A549 (cell line): ENCODE measurements at regions of chr5 and their contacts with region 1.

Region 1: GRCh38 chr5:158074992-158075769 is 216.2 kb upstream of the CLINT1 start:
- DNase-seq: peak; percentile 59 to 70
- ATAC-seq: peak; percentile 88 to 95
- H3K4me3 ChIP-seq: no peak overlapping the region
- H3K27ac ChIP-seq: no peak overlapping the region
- H3K4me1 ChIP-seq: no peaks in the 10 kb centered on the region
- CTCF ChIP-seq: peak; percentile 69
- EP300 ChIP-seq: no peak
- POLR2A ChIP-seq: no peak
- RAD21 ChIP-seq: peak; percentile 65 to 68

Region 2: DNA sequence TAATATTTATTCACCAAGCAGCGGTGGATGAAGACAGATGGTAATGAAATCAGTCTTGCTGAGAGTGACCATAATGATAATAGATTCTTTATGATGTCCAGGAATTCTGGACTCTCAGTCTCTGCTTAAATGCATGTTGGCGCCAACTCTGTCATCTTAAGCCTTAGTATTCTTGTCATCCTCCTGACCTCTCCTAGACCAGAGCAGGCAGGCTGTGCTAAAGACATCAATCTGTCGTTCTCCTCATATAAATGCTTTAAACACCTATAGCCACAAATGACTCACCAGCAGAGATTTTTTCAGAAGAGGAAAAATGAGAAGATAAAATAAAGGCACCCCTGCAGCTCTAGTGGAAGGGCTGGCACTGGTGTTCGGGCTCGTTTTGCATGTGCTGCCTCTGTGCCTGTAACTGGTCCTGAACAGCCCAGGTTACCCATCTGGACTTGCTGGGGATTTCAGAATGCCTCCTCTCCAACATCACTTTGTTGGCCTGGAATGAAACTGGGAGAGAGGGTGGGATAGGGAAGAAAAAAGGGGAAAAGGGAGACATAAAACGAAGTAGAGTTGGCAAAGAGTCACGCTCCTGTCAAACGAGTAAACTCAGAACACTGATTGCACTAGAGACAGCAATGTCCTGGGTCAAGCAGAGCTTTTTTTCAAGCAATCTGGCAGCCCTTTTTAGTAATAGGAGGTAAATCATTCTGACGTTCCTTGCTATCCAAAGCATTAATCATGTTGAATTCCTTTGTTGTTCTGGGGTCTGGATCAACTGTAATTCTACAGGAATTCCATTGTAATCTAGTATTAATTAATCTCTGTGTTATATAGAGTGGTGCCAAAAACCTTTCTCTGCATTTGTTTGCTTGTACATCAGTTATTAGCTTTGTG is 20.7 kb before region 1 on chr5:
- CTCF ChIA-PET with region 1: interaction called, 11 read pairs
- POLR2A ChIA-PET with region 1: no interaction called
- DNase-seq: no peak
- ATAC-seq: no peak
- H3K4me3 ChIP-seq: no peak overlapping the region
- H3K27ac ChIP-seq: no peak overlapping the region
- H3K4me1 ChIP-seq: no peaks in the 10 kb centered on the region
- CTCF ChIP-seq: no peak
- EP300 ChIP-seq: no peak
- POLR2A ChIP-seq: no peak
- RAD21 ChIP-seq: no peak

Region 3: DNA sequence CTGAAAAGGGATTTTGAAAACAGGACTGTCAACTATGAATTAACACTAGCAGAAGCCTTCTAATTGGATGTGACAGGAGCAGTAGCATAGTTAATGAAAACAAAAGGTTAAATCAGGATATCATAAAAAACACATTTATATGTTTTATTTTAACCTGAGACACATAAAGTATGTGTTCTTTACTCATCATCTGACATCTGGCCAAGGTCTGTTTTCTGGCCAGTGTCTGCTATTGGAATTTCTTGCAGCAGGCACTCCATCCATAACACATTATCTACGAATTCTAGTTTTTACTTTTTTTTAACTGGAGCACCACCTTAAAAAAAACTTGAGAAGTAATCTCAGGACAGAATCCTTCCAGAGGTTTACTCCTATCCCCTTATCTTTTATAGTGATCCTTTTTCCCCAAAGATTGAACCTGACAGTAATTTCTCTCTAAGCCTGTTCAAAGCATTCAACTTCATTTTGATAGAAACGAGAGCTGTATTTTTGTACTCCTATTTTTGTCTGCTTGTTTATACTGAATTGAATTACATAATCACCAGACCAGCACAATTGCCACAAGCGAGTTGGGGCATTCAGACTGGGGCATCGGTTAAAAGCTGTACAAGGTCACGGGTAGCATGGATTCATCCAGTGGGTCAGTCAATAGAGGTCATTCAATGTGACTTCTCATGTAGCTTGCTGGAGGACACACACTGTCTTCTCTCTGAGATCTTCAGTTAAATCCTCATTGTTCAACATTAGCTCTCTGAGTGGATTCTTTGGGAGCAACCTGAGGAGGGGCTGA is 10.7 kb before region 1 on chr5:
- CTCF ChIA-PET with region 1: interaction called, 20 read pairs
- POLR2A ChIA-PET with region 1: no interaction called
- DNase-seq: no peak
- ATAC-seq: no peak
- H3K4me3 ChIP-seq: no peak overlapping the region
- H3K27ac ChIP-seq: no peak overlapping the region
- H3K4me1 ChIP-seq: no peaks in the 10 kb centered on the region
- CTCF ChIP-seq: no peak
- EP300 ChIP-seq: no peak
- POLR2A ChIP-seq: no peak
- RAD21 ChIP-seq: no peak

Region 4: GRCh38 chr5:158234323-158235158 is 159.4 kb after region 1 on chr5:
- CTCF ChIA-PET with region 1: no interaction called
- POLR2A ChIA-PET with region 1: no interaction called
- DNase-seq: no peak
- ATAC-seq: no peak
- H3K4me3 ChIP-seq: no peak overlapping the region
- H3K27ac ChIP-seq: no peak overlapping the region
- H3K4me1 ChIP-seq: no peaks in the 10 kb centered on the region
- CTCF ChIP-seq: no peak
- EP300 ChIP-seq: no peak
- POLR2A ChIP-seq: no peak
- RAD21 ChIP-seq: no peak

Region 5: GRCh38 chr5:159133041-159133741 is 1058.0 kb after region 1 on chr5:
- CTCF ChIA-PET with region 1: interaction called, 13 read pairs
- POLR2A ChIA-PET with region 1: no interaction called
- DNase-seq: peak; percentile 25 to 65
- ATAC-seq: peak; percentile 61 to 78
- H3K4me3 ChIP-seq: no peak overlapping the region
- H3K27ac ChIP-seq: peak overlapping the region; percentile 4 to 29; a peak in 1 of 6 replicates
- H3K4me1 ChIP-seq: peaks cover 25% of the 10 kb centered on the region
- CTCF ChIP-seq: peak; percentile 93
- EP300 ChIP-seq: no peak
- POLR2A ChIP-seq: no peak
- RAD21 ChIP-seq: peak; percentile 92 to 93